Cardiac septum (tissue), 1 donor: ENCODE measurements at regions of chr20 and their contacts with region 1.

Region 1: GRCh38 chr20:3888622-3889488 is at the start of gene PANK2:
- DNase-seq: peak; percentile 100
- total RNA-seq, gene PANK2: 21.5 TPM

Region 2: GRCh38 chr20:3932681-3933080 is 43.8 kb after region 1 on chr20:
- intact Hi-C with region 1: loop called (anchors 5 kb)
- DNase-seq: no peak

Region 3: GRCh38 chr20:4089756-4090487 is 201.1 kb after region 1 on chr20:
- intact Hi-C with region 1: loop called (anchors 5 kb)
- DNase-seq: peak; percentile 79